Pancreas (tissue), 10 donors: ENCODE measurements at regions of chr5 and their contacts with region 1.

Region 1: GRCh38 chr5:91280362-91281269 is 102.5 kb downstream of the ARRDC3 start:
- DNase-seq: peak; percentile 89 to 95 (median 93)
- ATAC-seq: peak; percentile 94 to 98 (median 96)
- H3K4me3 ChIP-seq: peak overlapping the region; percentile 29 to 59 (median 36)
- H3K27ac ChIP-seq: peak overlapping the region; percentile 60 to 94 (median 85)
- H3K4me1 ChIP-seq: peaks cover 0 to 13% (median 0%) of the 10 kb centered on the region in 3 donors
- H3K27me3 ChIP-seq: no peaks in the 10 kb centered on the region
- CTCF ChIP-seq: no peak

Region 2: GRCh38 chr5:91357012-91357813 is 76.6 kb after region 1 on chr5:
- intact Hi-C with region 1: loop called in 1 of 3 experiments (anchors 10 kb)
- DNase-seq: peak in 5 of 6 donors; percentile 54 to 79 (median 60)
- ATAC-seq: peak; percentile 90 to 96 (median 94)
- H3K4me3 ChIP-seq: peak overlapping the region in 2 of 4 donors; percentile 0 to 1
- H3K27ac ChIP-seq: peak overlapping the region in 3 of 4 donors; percentile 1 to 57 (median 48)
- H3K4me1 ChIP-seq: peaks cover 0 to 10% (median 6%) of the 10 kb centered on the region in 3 donors
- H3K27me3 ChIP-seq: no peaks in the 10 kb centered on the region
- CTCF ChIP-seq: no peak